Activated naive CD4-positive, alpha-beta T cell treated with anti-CD3 and anti-CD28 coated beads for 36 hours (primary cell): ENCODE measurements at regions of chr2 and their contacts with region 1.

Region 1: DNA sequence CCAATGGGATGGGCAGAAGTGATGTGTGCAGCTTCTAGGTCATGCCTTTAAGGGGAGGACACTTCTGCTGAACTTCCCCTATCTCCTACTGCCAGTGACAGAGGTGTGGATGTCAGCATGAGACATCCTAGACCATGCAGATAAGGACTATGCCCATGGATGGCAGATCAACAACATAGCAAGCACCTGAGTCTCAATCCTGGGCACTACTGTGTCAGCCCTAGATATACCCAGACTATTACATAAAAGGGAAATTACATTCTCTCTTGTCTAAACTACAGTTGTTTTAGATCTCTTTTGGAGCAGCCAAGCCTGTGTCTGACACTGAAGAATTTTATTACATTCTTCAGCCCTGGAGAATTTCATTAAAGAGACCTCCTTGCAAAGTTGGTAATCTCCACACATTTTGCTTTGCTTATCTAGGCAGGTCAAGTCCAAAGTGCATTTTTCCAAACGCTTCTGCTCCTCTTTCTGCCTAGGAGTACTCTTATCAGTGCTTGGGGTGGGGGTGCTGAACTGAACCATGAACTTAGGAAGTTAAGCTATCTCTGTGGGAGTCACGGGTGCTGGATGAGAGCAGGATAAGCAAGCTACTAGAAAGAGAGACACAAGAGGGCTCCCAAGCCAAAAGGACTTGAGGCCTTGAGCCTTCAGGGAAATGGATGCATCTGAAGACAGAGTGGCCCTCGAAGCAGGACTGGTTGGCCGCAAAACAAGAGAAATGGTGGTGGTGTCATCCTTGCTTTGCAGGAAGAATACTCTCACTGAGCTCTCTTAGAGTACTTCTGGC is 95.2 kb upstream of the SPRED2 start:
- DNase-seq: no peak
- H3K4me3 Mint-ChIP-seq: no peak overlapping the region
- H3K27ac Mint-ChIP-seq: no peak overlapping the region
- H3K4me1 Mint-ChIP-seq: no peaks in the 10 kb centered on the region
- H3K27me3 Mint-ChIP-seq: peaks cover 1% of the 10 kb centered on the region

Region 2: DNA sequence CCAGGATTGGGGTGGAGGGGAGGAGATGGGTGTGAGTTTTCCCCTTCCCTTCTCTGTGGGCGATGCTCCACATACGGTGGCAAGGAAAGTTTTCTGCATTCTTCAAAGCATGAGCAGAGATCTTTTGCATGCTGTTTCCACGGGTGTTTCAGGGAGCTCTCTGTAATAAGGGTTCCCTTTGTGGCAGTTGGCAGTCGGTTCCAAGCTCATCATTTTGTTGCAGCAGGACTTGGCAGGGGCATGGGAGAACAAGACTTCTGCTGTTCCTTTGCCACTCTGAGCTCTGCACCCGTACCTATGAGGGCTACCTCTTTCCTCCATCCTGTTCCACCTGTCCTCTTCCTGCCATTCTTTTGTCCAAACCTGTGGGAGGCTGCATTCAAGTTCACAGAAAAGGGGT is 23.9 kb before region 1 on chr2:
- CTCF ChIA-PET with region 1: no interaction called
- intact Hi-C with region 1: loop called (anchors 1 kb)
- DNase-seq: no peak
- H3K4me3 Mint-ChIP-seq: no peak overlapping the region
- H3K27ac Mint-ChIP-seq: no peak overlapping the region
- H3K4me1 Mint-ChIP-seq: no peaks in the 10 kb centered on the region
- H3K27me3 Mint-ChIP-seq: no peaks in the 10 kb centered on the region

Region 3: DNA sequence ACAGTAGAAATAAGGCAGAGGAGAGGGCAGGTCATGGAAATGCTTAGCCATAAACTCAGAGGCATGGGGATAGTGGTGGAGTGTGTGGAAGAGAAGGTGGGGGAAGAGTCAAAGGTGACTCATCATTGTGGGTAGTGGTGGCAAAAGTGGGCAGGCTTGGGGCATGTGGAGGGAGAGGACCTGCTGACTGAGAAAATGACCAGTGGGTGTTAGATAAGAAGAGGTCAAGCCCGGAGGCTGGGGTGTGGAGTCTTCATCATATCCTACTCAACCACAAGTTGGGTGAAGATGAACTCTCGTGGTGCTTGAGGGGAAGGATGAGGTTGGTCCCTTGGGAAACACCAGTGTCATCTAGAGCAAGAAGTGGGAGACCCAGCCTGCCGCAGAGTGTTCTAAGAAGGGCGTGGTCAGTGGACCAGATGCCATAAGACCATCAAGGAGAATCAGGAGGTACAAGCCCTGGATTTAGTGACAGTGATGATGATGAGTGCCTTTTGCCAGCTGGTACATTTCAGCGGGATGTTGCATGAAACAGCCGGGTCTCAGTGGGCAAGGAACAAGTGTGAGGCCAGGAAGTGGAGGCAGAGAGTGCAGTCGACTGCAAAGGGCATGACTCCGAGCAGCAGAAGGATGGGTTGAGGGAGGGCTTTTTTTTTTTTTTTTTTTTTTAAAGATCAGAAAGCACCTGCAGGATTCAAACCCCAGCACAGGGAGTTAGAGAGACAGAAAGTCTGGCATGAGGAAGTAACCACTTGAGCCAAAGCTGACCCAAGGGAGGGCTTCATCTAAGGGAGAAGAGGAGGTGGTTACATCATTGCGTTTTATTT is 27.3 kb after region 1 on chr2:
- CTCF ChIA-PET with region 1: no interaction called
- intact Hi-C with region 1: loop called (anchors 1 kb)
- DNase-seq: no peak
- H3K4me3 Mint-ChIP-seq: no peak overlapping the region
- H3K27ac Mint-ChIP-seq: no peak overlapping the region
- H3K4me1 Mint-ChIP-seq: peaks cover 3% of the 10 kb centered on the region
- H3K27me3 Mint-ChIP-seq: no peaks in the 10 kb centered on the region

Region 4: DNA sequence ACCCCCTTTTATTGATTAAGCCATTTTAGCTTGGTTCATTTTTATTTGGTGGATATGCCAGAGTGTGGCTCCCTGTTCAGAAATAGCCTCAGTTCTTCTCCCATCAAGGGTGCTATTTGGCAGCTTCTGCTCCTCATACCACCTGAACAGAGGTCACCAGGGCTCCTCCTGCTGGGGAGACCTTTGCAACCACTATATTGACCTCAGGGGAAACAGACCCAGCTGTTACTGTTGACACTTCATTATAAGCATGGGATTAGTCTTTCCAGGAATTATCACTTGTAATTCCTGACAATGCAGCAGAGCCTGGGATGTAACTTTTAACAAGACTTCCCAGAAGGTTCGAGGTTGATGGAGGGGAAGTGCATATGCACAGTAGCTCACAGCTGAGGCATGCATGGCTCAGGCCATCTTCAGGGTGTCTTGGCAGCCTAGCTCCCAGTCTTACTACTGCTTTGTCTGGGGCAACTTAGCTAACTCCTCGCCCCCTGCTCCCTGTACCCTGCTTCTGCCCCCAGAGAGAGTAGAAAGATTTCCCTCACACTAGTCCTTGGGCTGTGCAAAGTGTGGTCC is 144.1 kb after region 1 on chr2:
- CTCF ChIA-PET with region 1: no interaction called
- intact Hi-C with region 1: no loop called
- DNase-seq: no peak
- H3K4me3 Mint-ChIP-seq: no peak overlapping the region
- H3K27ac Mint-ChIP-seq: no peak overlapping the region
- H3K4me1 Mint-ChIP-seq: no peaks in the 10 kb centered on the region
- H3K27me3 Mint-ChIP-seq: peaks cover 3% of the 10 kb centered on the region

Region 5: GRCh38 chr2:65778137-65778536 is 250.5 kb after region 1 on chr2:
- CTCF ChIA-PET with region 1: no interaction called
- intact Hi-C with region 1: no loop called
- DNase-seq: no peak
- H3K4me3 Mint-ChIP-seq: no peak overlapping the region
- H3K27ac Mint-ChIP-seq: no peak overlapping the region
- H3K4me1 Mint-ChIP-seq: no peaks in the 10 kb centered on the region
- H3K27me3 Mint-ChIP-seq: no peaks in the 10 kb centered on the region